AG04450 (cell line): ENCODE measurements at regions of chr11 and their contacts with region 1.

Region 1: GRCh38 chr11:130894322-130895025 is 21.8 kb downstream of the SNX19 start:
- DNase-seq: peak; percentile 55
- H3K4me3 ChIP-seq: no peak overlapping the region
- H3K27ac ChIP-seq: no peak overlapping the region
- H3K27me3 ChIP-seq: no peaks in the 10 kb centered on the region
- CTCF ChIP-seq: peak; percentile 91

Region 2: GRCh38 chr11:130213143-130213978 is 681.1 kb before region 1 on chr11:
- CTCF ChIA-PET with region 1: interaction called, 11 read pairs
- POLR2A ChIA-PET with region 1: no interaction called
- DNase-seq: no peak
- H3K4me3 ChIP-seq: no peak overlapping the region
- H3K27ac ChIP-seq: no peak overlapping the region
- H3K27me3 ChIP-seq: peaks cover 53% of the 10 kb centered on the region
- CTCF ChIP-seq: peak; percentile 88

Region 3: GRCh38 chr11:130426837-130427341 is 467.6 kb before region 1 on chr11:
- CTCF ChIA-PET with region 1: interaction called, 166 read pairs
- POLR2A ChIA-PET with region 1: no interaction called
- DNase-seq: no peak
- H3K4me3 ChIP-seq: peak overlapping the region; percentile 58
- H3K27ac ChIP-seq: no peak overlapping the region
- H3K27me3 ChIP-seq: peaks cover 76% of the 10 kb centered on the region
- CTCF ChIP-seq: no peak

Region 4: GRCh38 chr11:130689222-130689908 is 205.1 kb before region 1 on chr11:
- CTCF ChIA-PET with region 1: no interaction called
- POLR2A ChIA-PET with region 1: no interaction called
- DNase-seq: no peak
- H3K4me3 ChIP-seq: no peak overlapping the region
- H3K27ac ChIP-seq: no peak overlapping the region
- H3K27me3 ChIP-seq: no peaks in the 10 kb centered on the region
- CTCF ChIP-seq: no peak

Region 5: GRCh38 chr11:130872981-130873380 is 21.5 kb before region 1 on chr11:
- CTCF ChIA-PET with region 1: interaction called, 17 read pairs
- POLR2A ChIA-PET with region 1: interaction called, 3 read pairs
- DNase-seq: peak; percentile 62
- H3K4me3 ChIP-seq: no peak overlapping the region
- H3K27ac ChIP-seq: peak overlapping the region; percentile 87
- H3K27me3 ChIP-seq: no peaks in the 10 kb centered on the region
- CTCF ChIP-seq: no peak

Region 6: GRCh38 chr11:130882138-130882551 is 12.3 kb before region 1 on chr11:
- CTCF ChIA-PET with region 1: interaction called, 38 read pairs
- POLR2A ChIA-PET with region 1: no interaction called
- DNase-seq: no peak
- H3K4me3 ChIP-seq: no peak overlapping the region
- H3K27ac ChIP-seq: no peak overlapping the region
- H3K27me3 ChIP-seq: no peaks in the 10 kb centered on the region
- CTCF ChIP-seq: no peak

Region 7: GRCh38 chr11:132658696-132659095 is 1764.2 kb after region 1 on chr11:
- CTCF ChIA-PET with region 1: no interaction called
- POLR2A ChIA-PET with region 1: no interaction called
- DNase-seq: no peak
- H3K4me3 ChIP-seq: no peak overlapping the region
- H3K27ac ChIP-seq: no peak overlapping the region
- H3K27me3 ChIP-seq: no peaks in the 10 kb centered on the region
- CTCF ChIP-seq: no peak